ENCODE measurements at regions of chr22 and their contacts with region 1.

Region 1: GRCh38 chr22:27154717-27155116 is 497.3 kb downstream of the MIAT start:
- DNase-seq: no peak
- ATAC-seq: peak in 1 of 4 donors; percentile 65
- H3K4me3 ChIP-seq: no peak overlapping the region
- H3K27ac ChIP-seq: no peak overlapping the region
- H3K4me1 ChIP-seq: peaks cover 0 to 10% (median 0%) of the 10 kb centered on the region in 12 donors
- H3K27me3 ChIP-seq: peaks cover 0 to 32% (median 0%) of the 10 kb centered on the region in 9 donors
- CTCF ChIP-seq: no peak
- POLR2A ChIP-seq: no peak

Region 2: GRCh38 chr22:29011240-29012100 is 1856.8 kb after region 1 on chr22:
- intact Hi-C with region 1: loop called in 1 of 10 experiments (anchors 5 kb)
- DNase-seq: no peak
- ATAC-seq: no peak
- H3K4me3 ChIP-seq: no peak overlapping the region
- H3K27ac ChIP-seq: peak overlapping the region in 1 of 12 donors; percentile 9
- H3K4me1 ChIP-seq: peaks cover 0 to 42% (median 17%) of the 10 kb centered on the region in 12 donors
- H3K27me3 ChIP-seq: no peaks in the 10 kb centered on the region
- CTCF ChIP-seq: no peak
- POLR2A ChIP-seq: no peak

Measured in heart left ventricle (tissue), 16 donors.